CD8-positive, alpha-beta T cell (primary cell): ENCODE measurements at regions of chr6 and their contacts with region 1.

Region 1: DNA sequence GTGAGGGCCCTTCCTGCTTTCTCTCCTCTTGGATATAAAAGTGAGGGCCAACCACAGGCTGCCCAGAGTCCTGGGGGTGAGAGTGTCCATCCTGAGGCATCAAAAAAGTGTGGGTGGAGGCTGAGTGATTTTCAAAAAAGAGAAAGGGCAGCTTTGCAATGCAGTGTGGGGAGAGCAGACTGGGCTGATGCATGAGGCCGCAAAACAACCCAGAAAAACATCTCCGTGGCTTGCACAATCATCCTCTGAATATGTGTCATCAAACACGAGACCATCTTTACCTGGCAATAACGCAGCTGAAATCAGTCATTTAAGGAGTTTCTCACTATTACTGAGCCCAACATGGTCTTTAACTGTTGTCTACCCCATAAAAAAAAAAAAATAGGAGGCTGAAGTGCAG is 191.2 kb upstream of the SOX4 start:
- DNase-seq: no peak
- ATAC-seq: no peak
- H3K4me3 ChIP-seq: no peak overlapping the region
- H3K4me3 Mint-ChIP-seq: no peak overlapping the region
- H3K27ac ChIP-seq: no peak overlapping the region
- H3K27ac Mint-ChIP-seq: no peak overlapping the region
- H3K4me1 ChIP-seq: no peaks in the 10 kb centered on the region
- H3K4me1 Mint-ChIP-seq: no peaks in the 10 kb centered on the region
- H3K27me3 ChIP-seq: no peaks in the 10 kb centered on the region
- H3K27me3 Mint-ChIP-seq: no peaks in the 10 kb centered on the region
- CTCF ChIP-seq: no peak

Region 2: GRCh38 chr6:21478863-21479539 is 76.6 kb after region 1 on chr6:
- CTCF ChIA-PET with region 1: no interaction called
- POLR2A ChIA-PET with region 1: no interaction called
- intact Hi-C with region 1: loop called in 1 of 2 experiments (anchors 5 kb)
- DNase-seq: no peak
- ATAC-seq: no peak
- H3K4me3 ChIP-seq: no peak overlapping the region
- H3K4me3 Mint-ChIP-seq: no peak overlapping the region
- H3K27ac ChIP-seq: no peak overlapping the region
- H3K27ac Mint-ChIP-seq: no peak overlapping the region
- H3K4me1 ChIP-seq: no peaks in the 10 kb centered on the region
- H3K4me1 Mint-ChIP-seq: no peaks in the 10 kb centered on the region
- H3K27me3 ChIP-seq: no peaks in the 10 kb centered on the region
- H3K27me3 Mint-ChIP-seq: no peaks in the 10 kb centered on the region
- CTCF ChIP-seq: no peak